ENCODE measurements at regions of chr4 and their contacts with region 1.

Region 1: GRCh38 chr4:6269616-6270511 is at the start of gene WFS1:
- DNase-seq: peak; percentile 99
- ATAC-seq: peak; percentile 98 to 99 (median 98)
- H3K4me3 ChIP-seq: peak within 1 kb of the TSS; percentile 70 to 99 (median 88)
- H3K27ac ChIP-seq: peak within 1 kb of the TSS; percentile 59 to 94 (median 85)
- H3K4me1 ChIP-seq: peaks cover 10 to 54% (median 46%) of the 10 kb centered on the region in 12 donors
- H3K27me3 ChIP-seq: no peaks in the 10 kb centered on the region
- CTCF ChIP-seq: peak in 1 of 12 donors; percentile 5
- POLR2A ChIP-seq: peak; percentile 82 to 96
- total RNA-seq, gene WFS1: 55.5 to 202 (median 74.7) TPM

Region 2: GRCh38 chr4:6109842-6110719 is 159.8 kb before region 1 on chr4:
- intact Hi-C with region 1: no loop called
- DNase-seq: peak in 1 of 5 donors; percentile 1
- ATAC-seq: no peak
- H3K4me3 ChIP-seq: no peak overlapping the region
- H3K27ac ChIP-seq: no peak overlapping the region
- H3K4me1 ChIP-seq: no peaks in the 10 kb centered on the region
- H3K27me3 ChIP-seq: peaks cover 0 to 66% (median 5%) of the 10 kb centered on the region in 9 donors
- CTCF ChIP-seq: no peak
- POLR2A ChIP-seq: no peak

Region 3: GRCh38 chr4:6308899-6309643 is 39.2 kb after region 1 on chr4:
- intact Hi-C with region 1: loop called in 2 of 10 experiments (anchors 5 kb)
- DNase-seq: peak in 3 of 5 donors; percentile 45 to 77 (median 49)
- ATAC-seq: peak in 3 of 4 donors; percentile 63 to 77 (median 73)
- H3K4me3 ChIP-seq: peak overlapping the region; percentile 24 to 79 (median 61)
- H3K27ac ChIP-seq: peak overlapping the region in 9 of 12 donors; percentile 24 to 70 (median 42)
- H3K4me1 ChIP-seq: peaks cover 0 to 14% (median 4%) of the 10 kb centered on the region in 12 donors
- H3K27me3 ChIP-seq: peaks cover 0 to 18% (median 0%) of the 10 kb centered on the region in 9 donors
- CTCF ChIP-seq: peak in 5 of 12 donors; percentile 7 to 32 (median 21)
- POLR2A ChIP-seq: no peak

Measured in heart left ventricle (tissue), 16 donors.